ENCODE measurements at regions of chr4 and their contacts with region 1.

Region 1: DNA sequence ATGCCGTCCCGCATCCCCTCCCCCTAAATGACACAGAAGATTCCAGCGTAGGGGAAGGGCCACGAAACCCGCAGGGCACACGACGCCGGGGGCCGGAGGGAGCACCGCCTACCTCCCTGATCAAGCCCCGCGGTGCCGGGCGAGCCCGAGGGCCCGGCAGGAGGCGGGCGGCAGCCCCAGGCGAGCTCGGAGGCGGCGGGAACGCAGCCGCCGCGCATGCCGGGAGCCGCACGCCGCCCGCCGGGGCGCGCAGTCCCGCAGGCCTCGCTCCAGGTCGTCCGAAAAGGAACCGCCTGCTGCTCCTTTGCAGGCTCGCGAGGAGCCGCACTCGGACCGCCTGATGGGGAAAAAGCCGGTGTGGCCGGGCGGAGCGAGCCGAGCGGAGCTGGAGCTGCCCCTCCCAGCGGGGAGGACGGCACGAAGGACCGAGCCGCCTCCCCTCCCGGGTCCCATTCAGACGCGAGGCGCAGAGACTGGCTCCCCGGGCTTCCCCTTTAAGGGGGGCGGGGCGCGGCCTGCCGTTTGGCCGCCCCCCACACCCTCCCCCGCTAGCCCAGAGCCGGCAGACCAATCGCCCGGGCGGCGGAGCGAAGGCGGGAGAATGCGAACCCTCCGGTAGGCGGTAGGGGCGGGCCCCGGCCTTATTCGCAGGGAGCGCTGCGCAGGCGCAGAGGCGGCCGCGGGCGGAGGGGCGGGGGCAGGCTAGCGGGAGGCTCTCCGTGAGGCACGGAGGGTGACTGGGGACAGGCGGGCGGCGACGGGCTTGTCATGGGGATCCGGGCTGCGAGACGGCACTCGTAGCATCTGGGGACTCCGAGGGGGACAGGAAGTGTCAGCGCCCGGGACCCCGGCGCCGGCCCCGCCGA is 561 bp upstream of the ING2 start:
- DNase-seq: peak; percentile 99
- H3K4me3 ChIP-seq: peak overlapping the region; percentile 70 to 91 (median 82)
- H3K27ac ChIP-seq: peak overlapping the region; percentile 93 to 98 (median 97)
- H3K4me1 ChIP-seq: peaks cover 13 to 36% (median 21%) of the 10 kb centered on the region in 4 donors
- H3K27me3 ChIP-seq: no peaks in the 10 kb centered on the region
- CTCF ChIP-seq: peak in 2 of 5 experiments; percentile 36 to 50
- EP300 ChIP-seq: no peak
- POLR2A ChIP-seq: peak; percentile 84

Region 2: GRCh38 chr4:183444214-183445066 is 59.9 kb before region 1 on chr4 and contains the start of gene CDKN2AIP:
- in situ Hi-C with region 1: no loop called
- intact Hi-C with region 1: loop called (anchors 2 kb)
- DNase-seq: peak; percentile 95
- H3K4me3 ChIP-seq: peak within 1 kb of the TSS; percentile 54 to 85 (median 80)
- H3K27ac ChIP-seq: peak within 1 kb of the TSS; percentile 95 to 98 (median 98)
- H3K4me1 ChIP-seq: peaks cover 28 to 55% (median 35%) of the 10 kb centered on the region in 4 donors
- H3K27me3 ChIP-seq: no peaks in the 10 kb centered on the region
- CTCF ChIP-seq: peak in 1 of 5 experiments; percentile 29
- EP300 ChIP-seq: peak; percentile 16
- POLR2A ChIP-seq: peak; percentile 94
- total RNA-seq, gene CDKN2AIP: 13.9 to 26.2 (median 24.7) TPM

Measured in transverse colon (tissue), 4 donors.